A549 (cell line): ENCODE measurements at regions of chr12 and their contacts with region 1.

Region 1: GRCh38 chr12:109110988-109111495 is 5.3 kb upstream of the ACACB start:
- DNase-seq: peak; percentile 87
- ATAC-seq: peak; percentile 93 to 98
- H3K4me3 ChIP-seq: peak overlapping the region; percentile 44
- H3K27ac ChIP-seq: peak overlapping the region; percentile 85 to 90
- H3K4me1 ChIP-seq: peaks cover 11% of the 10 kb centered on the region
- CTCF ChIP-seq: no peak
- EP300 ChIP-seq: no peak
- POLR2A ChIP-seq: peak; percentile 78
- RAD21 ChIP-seq: no peak

Region 2: GRCh38 chr12:109121346-109121880 is 10.4 kb after region 1 on chr12:
- CTCF ChIA-PET with region 1: interaction called, 29 read pairs
- POLR2A ChIA-PET with region 1: no interaction called
- DNase-seq: no peak
- ATAC-seq: peak in 1 of 2 experiments; percentile 26; a peak in 1 of 6 replicates
- H3K4me3 ChIP-seq: no peak overlapping the region
- H3K27ac ChIP-seq: no peak overlapping the region
- H3K4me1 ChIP-seq: no peaks in the 10 kb centered on the region
- CTCF ChIP-seq: no peak
- EP300 ChIP-seq: no peak
- POLR2A ChIP-seq: no peak
- RAD21 ChIP-seq: no peak

Region 3: DNA sequence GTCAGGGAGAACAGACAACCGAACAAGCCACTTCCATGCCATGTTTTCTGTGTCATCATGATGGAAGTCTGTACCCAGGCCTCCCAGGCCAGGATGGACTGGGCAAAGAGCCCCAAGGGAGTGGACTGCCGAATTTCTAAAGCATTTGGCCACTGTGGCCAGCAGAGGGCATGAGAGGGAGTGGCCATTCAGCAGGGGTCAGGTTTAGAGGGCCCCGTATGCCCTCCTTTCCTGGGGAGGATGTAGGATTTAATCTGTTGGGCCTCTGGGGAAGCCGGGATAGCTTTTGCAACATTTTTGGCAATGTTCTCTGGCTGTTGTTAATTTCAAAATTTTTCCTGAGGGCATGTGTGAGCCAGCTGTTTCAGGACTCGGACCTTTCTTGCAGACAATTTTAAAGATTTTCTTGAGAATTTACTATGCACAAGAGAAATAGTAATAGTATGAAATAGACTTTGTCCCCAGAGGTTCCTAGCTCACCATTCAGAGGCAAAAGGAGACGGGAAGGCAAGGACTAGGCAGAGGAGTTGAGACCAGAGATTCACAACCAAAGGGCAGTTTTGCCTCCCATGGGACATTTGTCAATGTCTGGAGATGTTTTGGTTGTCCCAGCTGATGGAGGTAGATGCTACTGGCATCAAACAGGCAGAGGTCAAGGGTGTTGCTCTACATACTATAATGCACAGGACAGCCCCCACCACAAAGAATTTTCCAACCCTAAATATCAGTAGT is 23.3 kb after region 1 on chr12:
- CTCF ChIA-PET with region 1: interaction called, 17 read pairs
- POLR2A ChIA-PET with region 1: interaction called, 5 read pairs
- DNase-seq: peak; percentile 42 to 62
- ATAC-seq: peak in 1 of 2 experiments; percentile 85; a peak in 3 of 6 replicates
- H3K4me3 ChIP-seq: no peak overlapping the region
- H3K27ac ChIP-seq: no peak overlapping the region
- H3K4me1 ChIP-seq: no peaks in the 10 kb centered on the region
- CTCF ChIP-seq: peak; percentile 58
- EP300 ChIP-seq: no peak
- POLR2A ChIP-seq: no peak
- RAD21 ChIP-seq: peak; percentile 50 to 59; a peak in 4 of 5 replicates

Region 4: GRCh38 chr12:109377139-109377685 is 266.2 kb after region 1 on chr12:
- CTCF ChIA-PET with region 1: interaction called, 58 read pairs
- POLR2A ChIA-PET with region 1: no interaction called
- DNase-seq: no peak
- ATAC-seq: no peak
- H3K4me3 ChIP-seq: no peak overlapping the region
- H3K27ac ChIP-seq: no peak overlapping the region
- H3K4me1 ChIP-seq: no peaks in the 10 kb centered on the region
- CTCF ChIP-seq: no peak
- EP300 ChIP-seq: no peak
- POLR2A ChIP-seq: no peak
- RAD21 ChIP-seq: no peak

Region 5: DNA sequence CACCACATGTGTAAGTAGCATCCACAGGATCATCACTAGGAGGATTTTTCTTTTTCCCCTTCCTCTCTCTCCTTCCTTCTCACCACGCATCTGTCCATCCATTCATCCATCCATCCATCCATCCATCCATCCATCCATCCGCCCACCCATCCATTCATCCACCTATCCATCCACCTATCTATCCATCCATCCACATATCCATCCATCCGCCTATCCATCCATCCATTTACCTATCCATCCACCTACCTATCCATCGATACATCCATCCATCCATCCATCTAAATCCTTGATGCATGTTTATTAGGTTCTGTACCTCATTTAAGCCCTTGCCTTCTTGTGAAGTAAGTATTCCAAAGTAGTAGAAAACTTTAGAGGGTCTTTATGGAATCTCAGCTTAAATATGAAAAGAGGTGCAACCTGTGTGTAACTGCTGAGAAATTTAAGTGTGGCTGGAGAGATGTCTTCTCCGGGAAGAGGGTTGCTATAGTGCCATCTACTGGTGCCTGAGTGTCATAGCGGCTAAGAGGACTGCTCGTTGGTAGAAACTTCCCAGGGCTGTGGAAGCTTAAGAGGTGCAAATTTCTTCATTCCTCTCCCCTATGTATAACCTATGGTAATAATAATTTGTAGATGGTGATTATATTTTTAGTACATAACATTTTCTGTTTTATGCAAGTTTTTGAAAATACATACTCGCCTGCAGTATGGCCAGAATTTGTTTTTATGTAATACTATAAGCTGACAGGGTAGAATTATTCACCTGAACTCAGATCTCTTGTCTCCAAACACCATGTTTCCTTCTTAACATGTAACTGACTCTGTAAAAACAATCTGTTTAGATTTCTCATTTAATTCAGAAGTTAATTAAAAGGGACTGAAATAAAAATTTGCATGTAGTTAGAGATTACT is 282.6 kb after region 1 on chr12:
- CTCF ChIA-PET with region 1: interaction called, 14 read pairs
- POLR2A ChIA-PET with region 1: no interaction called
- DNase-seq: peak; percentile 76 to 80
- ATAC-seq: peak; percentile 87 to 88
- H3K4me3 ChIP-seq: no peak overlapping the region
- H3K27ac ChIP-seq: no peak overlapping the region
- H3K4me1 ChIP-seq: no peaks in the 10 kb centered on the region
- CTCF ChIP-seq: peak; percentile 84
- EP300 ChIP-seq: no peak
- POLR2A ChIP-seq: no peak
- RAD21 ChIP-seq: peak; percentile 53 to 74